Kidney (tissue), 22 donors: ENCODE measurements at regions of chr11 and their contacts with region 1.

Region 1: DNA sequence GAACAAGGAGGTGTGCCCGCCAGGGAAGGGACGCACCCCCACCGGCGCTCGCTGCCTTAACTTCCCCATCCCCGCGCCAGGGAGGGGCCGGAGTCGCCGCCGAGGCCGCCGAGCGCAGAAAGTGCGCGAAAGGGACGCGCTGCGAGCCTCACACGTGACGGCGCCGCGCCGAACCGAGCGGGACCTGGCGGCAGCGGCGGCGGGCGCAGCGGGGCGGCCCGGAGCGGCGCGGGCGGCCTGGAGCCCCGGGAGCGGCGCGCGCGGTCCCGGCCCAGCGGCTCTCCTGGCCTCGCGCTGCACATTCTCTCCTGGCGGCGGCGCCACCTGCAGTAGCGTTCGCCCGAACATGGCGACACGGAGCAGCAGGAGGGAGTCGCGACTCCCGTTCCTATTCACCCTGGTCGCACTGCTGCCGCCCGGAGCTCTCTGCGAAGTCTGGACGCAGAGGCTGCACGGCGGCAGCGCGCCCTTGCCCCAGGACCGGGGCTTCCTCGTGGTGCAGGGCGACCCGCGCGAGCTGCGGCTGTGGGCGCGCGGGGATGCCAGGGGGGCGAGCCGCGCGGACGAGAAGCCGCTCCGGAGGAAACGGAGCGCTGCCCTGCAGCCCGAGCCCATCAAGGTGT is at the start of gene SORL1:
- DNase-seq: peak; percentile 83 to 93 (median 89)
- H3K4me3 ChIP-seq: peak within 1 kb of the TSS; percentile 65 to 82 (median 70)
- H3K27ac ChIP-seq: peak within 1 kb of the TSS; percentile 64
- H3K4me1 ChIP-seq: peaks cover 0 to 12% (median 0%) of the 10 kb centered on the region in 3 donors
- H3K27me3 ChIP-seq: no peaks in the 10 kb centered on the region
- CTCF ChIP-seq: peak; percentile 73
- total RNA-seq, gene SORL1: 74.2 TPM

Region 2: DNA sequence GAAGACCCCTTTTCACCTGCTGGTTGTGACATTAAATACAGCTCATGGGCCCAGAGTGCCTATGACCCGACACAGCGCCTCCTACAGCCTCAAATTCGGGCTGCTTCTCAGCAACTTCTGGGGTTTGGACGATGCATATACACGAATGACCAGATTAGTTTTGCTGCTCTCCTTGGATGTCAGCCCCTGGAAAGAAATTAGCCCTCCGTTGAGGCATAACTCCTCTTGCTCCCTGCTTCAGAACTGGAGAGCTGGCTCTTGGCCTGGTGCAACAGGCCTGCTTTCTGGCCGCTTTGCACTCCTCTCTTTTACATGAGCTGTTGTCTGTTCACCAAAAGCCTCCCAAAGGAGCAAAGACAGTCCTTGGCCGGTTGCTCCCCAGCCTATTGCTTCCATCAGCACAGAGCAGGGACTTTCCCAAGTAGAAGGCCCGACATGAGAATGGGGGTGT is 347.8 kb before region 1 on chr11:
- intact Hi-C with region 1: no loop called
- DNase-seq: no peak
- H3K4me3 ChIP-seq: no peak overlapping the region
- H3K27ac ChIP-seq: no peak overlapping the region
- H3K4me1 ChIP-seq: peaks cover 0 to 3% (median 3%) of the 10 kb centered on the region in 3 donors
- H3K27me3 ChIP-seq: no peaks in the 10 kb centered on the region
- CTCF ChIP-seq: no peak

Region 3: DNA sequence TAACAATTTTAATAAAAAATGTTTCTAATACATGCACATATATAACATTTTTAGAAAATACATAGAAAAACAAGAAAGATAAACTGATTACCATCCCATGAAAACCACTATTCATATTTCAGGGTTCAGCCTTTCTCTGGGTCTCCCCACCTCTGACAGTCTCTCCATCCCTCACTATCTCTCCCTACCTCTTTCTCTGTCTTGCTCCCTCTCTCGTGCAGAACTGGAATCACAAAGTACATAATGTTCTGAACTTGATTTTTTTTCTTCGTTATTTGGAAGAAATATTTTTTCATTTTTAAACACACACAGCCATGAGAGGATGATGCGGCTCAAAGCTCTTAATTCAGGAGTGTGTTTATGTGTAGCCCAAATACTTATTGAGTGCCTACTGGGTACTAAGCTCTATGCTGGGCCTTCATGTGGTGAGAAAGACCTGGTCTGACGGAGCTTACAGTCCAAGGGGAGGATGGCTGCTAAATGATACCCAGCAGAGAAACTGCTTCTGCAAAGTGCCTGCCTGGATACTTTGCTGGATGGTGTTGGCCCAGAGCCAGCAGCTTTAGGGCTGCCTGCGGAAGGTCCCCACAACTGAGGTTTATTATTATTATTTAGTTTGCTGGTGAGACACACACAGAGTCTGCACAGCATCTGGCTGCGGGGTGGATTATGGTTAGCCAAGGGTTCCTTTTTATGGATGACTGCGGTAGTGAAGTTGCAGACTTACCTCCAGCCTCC is 117.0 kb before region 1 on chr11:
- intact Hi-C with region 1: loop called (anchors 10 kb)
- DNase-seq: no peak
- H3K4me3 ChIP-seq: no peak overlapping the region
- H3K27ac ChIP-seq: no peak overlapping the region
- H3K4me1 ChIP-seq: peaks cover 0 to 4% (median 3%) of the 10 kb centered on the region in 3 donors
- H3K27me3 ChIP-seq: no peaks in the 10 kb centered on the region
- CTCF ChIP-seq: no peak